Activated CD8-positive, alpha-beta memory T cell treated with anti-CD3 and anti-CD28 coated beads, Interleukin-2, amount 10 ng/mL, durations not matched to agents 7 days and 5 days (primary cell): ENCODE measurements at regions of chr9 and their contacts with region 1.

Region 1: GRCh38 chr9:93003552-93004407 is 54.7 kb upstream of the SUSD3 start:
- DNase-seq: peak; percentile 71
- ATAC-seq: peak; percentile 89
- H3K4me3 Mint-ChIP-seq: no peak overlapping the region
- H3K27ac Mint-ChIP-seq: peak overlapping the region; percentile 74
- H3K4me1 Mint-ChIP-seq: peaks cover 45% of the 10 kb centered on the region
- H3K27me3 Mint-ChIP-seq: no peaks in the 10 kb centered on the region

Region 2: GRCh38 chr9:92954049-92954861 is 49.5 kb before region 1 on chr9:
- CTCF ChIA-PET with region 1: interaction called, 14 read pairs
- DNase-seq: peak; percentile 94
- ATAC-seq: peak; percentile 84
- H3K4me3 Mint-ChIP-seq: peak overlapping the region; percentile 65
- H3K27ac Mint-ChIP-seq: peak overlapping the region; percentile 90
- H3K4me1 Mint-ChIP-seq: peaks cover 54% of the 10 kb centered on the region
- H3K27me3 Mint-ChIP-seq: no peaks in the 10 kb centered on the region

Region 3: GRCh38 chr9:92982130-92982529 is 21.6 kb before region 1 on chr9:
- CTCF ChIA-PET with region 1: interaction called, 11 read pairs
- DNase-seq: no peak
- ATAC-seq: no peak
- H3K4me3 Mint-ChIP-seq: no peak overlapping the region
- H3K27ac Mint-ChIP-seq: no peak overlapping the region
- H3K4me1 Mint-ChIP-seq: peaks cover 57% of the 10 kb centered on the region
- H3K27me3 Mint-ChIP-seq: no peaks in the 10 kb centered on the region

Region 4: GRCh38 chr9:93013856-93014582 is 10.2 kb after region 1 on chr9:
- CTCF ChIA-PET with region 1: interaction called, 14 read pairs
- DNase-seq: no peak
- ATAC-seq: no peak
- H3K4me3 Mint-ChIP-seq: no peak overlapping the region
- H3K27ac Mint-ChIP-seq: peak overlapping the region; percentile 27
- H3K4me1 Mint-ChIP-seq: no peaks in the 10 kb centered on the region
- H3K27me3 Mint-ChIP-seq: no peaks in the 10 kb centered on the region

Region 5: DNA sequence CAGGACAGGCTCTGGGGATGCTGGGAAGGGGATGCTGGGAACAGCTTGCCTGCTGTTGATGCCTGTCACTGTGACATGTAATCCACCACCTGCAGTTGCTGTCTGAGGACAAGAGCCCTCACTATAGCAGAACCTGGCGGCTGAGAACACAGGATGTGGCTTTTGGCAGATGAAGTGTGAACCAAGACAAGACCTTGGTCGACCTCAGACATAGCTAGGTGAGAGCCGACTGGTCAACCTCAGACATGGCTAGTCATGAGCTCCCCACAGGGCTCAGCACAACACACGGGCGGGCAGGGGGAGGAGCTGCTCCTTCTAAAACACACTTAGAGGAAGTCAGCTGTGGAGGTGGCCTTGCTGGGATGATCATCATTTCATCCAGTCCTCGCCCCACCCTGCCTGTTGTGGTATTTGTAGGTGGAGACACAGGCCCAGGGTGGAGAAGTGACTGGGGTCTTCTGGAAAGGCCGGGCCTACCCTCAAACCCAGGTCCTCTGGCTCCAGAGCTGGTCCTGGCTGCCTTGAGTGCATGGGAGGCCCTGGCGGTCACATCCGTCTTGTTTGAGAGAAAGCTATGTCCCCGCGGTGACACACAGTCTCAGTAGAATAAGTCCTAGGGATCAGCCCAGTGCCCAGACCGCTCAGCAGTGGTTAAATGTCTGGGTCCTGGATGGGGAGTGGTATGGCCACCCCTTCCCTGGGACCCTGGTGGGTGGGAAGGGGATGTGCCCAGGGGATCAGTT is 60.8 kb after region 1 on chr9:
- CTCF ChIA-PET with region 1: interaction called, 20 read pairs
- DNase-seq: peak; percentile 99
- ATAC-seq: peak; percentile 91
- H3K4me3 Mint-ChIP-seq: peak overlapping the region; percentile 71
- H3K27ac Mint-ChIP-seq: peak overlapping the region; percentile 98
- H3K4me1 Mint-ChIP-seq: peaks cover 77% of the 10 kb centered on the region
- H3K27me3 Mint-ChIP-seq: no peaks in the 10 kb centered on the region

Region 6: GRCh38 chr9:93501406-93501805 is 497.6 kb after region 1 on chr9:
- CTCF ChIA-PET with region 1: no interaction called
- DNase-seq: no peak
- ATAC-seq: peak; percentile 53
- H3K4me3 Mint-ChIP-seq: peak overlapping the region; percentile 74
- H3K27ac Mint-ChIP-seq: peak overlapping the region; percentile 89
- H3K4me1 Mint-ChIP-seq: peaks cover 49% of the 10 kb centered on the region
- H3K27me3 Mint-ChIP-seq: no peaks in the 10 kb centered on the region